Heart right ventricle (tissue), 16 donors: ENCODE measurements at regions of chr11 and their contacts with region 1.

Region 1: DNA sequence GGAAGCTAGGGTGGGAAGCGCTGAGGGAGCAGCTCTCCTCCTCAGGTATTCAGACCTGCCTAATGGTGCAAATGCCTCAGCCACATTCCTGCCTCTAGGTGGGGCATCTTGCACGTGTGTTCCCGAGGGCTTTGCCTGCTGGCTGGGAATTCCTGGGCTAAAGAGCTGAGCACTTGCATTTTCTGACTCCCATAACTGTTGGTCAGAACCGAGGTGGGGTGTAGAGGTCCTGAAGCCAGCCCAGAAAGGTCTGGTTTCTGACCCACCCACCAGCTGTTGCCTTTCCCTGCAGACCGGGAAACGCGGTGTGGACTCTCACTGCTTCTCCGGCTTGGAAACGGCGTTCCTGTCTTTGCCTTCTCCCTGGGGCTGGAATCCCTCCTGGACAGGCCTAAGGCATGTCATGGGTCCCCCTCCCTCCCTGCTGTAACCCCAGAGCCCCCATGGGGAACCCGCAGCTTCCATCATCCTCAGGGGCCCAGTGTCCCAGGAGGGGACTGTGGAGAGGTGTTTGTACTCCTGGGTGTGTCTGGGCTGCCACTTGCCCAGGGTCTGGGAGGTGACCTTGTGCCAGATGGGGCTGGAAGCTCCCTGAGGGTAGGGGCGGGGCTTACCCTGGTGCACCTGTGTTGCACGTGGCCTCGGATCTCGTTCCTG is 24.0 kb upstream of the SMIM38 start:
- DNase-seq: peak; percentile 58 to 76
- ATAC-seq: peak; percentile 79 to 90 (median 85)
- H3K4me3 ChIP-seq: no peak overlapping the region
- H3K27ac ChIP-seq: peak overlapping the region in 5 of 10 donors; percentile 23 to 72 (median 45)
- H3K4me1 ChIP-seq: peaks cover 5 to 26% (median 16%) of the 10 kb centered on the region in 9 donors
- H3K27me3 ChIP-seq: no peaks in the 10 kb centered on the region
- CTCF ChIP-seq: peak; percentile 65 to 95 (median 85)

Region 2: DNA sequence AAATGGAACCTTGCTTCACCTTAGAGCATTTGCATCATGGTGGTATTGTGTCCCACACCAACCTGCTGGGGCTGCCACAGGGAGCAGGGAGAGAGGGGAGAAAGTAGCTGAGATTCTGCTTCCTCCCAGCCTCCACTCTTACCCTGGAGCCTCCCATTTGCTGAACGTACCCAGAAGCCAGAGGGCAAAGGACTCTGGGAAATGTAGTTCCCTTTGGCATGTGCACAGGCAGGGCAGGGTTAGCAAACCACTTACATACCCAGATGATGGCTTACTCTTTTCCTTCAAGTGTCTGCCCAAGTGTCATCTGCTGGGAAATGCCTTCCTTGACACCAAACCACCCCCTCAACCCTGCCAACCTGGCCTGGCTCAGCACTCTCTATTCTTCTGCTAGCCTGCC is 40.9 kb after region 1 on chr11:
- intact Hi-C with region 1: no loop called
- DNase-seq: no peak
- ATAC-seq: no peak
- H3K4me3 ChIP-seq: no peak overlapping the region
- H3K27ac ChIP-seq: no peak overlapping the region
- H3K4me1 ChIP-seq: no peaks in the 10 kb centered on the region
- H3K27me3 ChIP-seq: no peaks in the 10 kb centered on the region
- CTCF ChIP-seq: no peak

Region 3: GRCh38 chr11:69211920-69212571 is 80.3 kb after region 1 on chr11:
- intact Hi-C with region 1: loop called in 2 of 10 experiments (anchors 5 to 10 kb)
- DNase-seq: no peak
- ATAC-seq: peak in 1 of 8 donors; percentile 26
- H3K4me3 ChIP-seq: no peak overlapping the region
- H3K27ac ChIP-seq: no peak overlapping the region
- H3K4me1 ChIP-seq: peaks cover 0 to 6% (median 0%) of the 10 kb centered on the region in 9 donors
- H3K27me3 ChIP-seq: peaks cover 0 to 12% (median 0%) of the 10 kb centered on the region in 7 donors
- CTCF ChIP-seq: peak in 7 of 9 donors; percentile 28 to 51 (median 41)

Region 4: DNA sequence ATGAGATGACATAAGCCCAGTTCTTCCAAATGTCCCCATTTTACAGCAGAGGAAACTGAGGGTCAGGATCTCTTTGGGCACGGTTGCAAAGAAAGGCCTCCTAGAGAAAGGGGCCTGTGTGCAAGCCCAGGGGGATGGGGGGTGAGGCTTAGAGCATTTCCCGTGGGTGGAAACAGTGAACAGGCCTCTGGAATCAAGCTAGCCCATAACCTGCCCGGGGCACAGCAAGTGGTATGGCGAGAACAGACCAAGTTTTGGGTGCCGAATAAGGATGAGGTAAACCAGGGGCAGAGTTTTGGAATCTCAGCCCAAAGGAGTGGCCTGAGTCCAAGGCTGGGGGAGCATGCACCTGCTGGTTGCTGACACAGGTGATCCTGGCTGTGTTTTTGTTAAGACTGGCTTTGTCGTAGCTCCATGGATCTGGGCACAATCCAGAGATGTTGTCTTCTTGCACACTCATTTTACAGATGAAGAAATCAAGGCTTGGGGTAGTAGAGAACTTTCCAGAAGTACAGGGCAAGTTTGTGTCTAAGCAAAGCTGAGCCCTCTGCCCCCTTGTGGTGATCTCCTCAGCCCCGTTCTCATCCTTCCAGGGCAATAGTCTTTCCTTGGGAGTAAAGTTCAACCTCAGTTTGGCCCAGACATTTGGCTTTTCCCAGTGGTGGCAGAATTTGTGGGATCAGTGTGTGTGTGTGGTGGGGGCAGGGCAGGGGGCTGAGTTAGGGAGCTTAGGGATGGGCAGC is 108.7 kb after region 1 on chr11:
- intact Hi-C with region 1: loop called in 1 of 10 experiments (anchors 10 kb)
- DNase-seq: no peak
- ATAC-seq: peak in 1 of 8 donors; percentile 12
- H3K4me3 ChIP-seq: no peak overlapping the region
- H3K27ac ChIP-seq: no peak overlapping the region
- H3K4me1 ChIP-seq: peaks cover 0 to 12% (median 8%) of the 10 kb centered on the region in 9 donors
- H3K27me3 ChIP-seq: no peaks in the 10 kb centered on the region
- CTCF ChIP-seq: peak in 5 of 9 donors; percentile 21 to 47 (median 33)

Region 5: GRCh38 chr11:69274531-69275255 is 142.9 kb after region 1 on chr11:
- intact Hi-C with region 1: loop called in 1 of 10 experiments (anchors 10 kb)
- DNase-seq: no peak
- ATAC-seq: no peak
- H3K4me3 ChIP-seq: no peak overlapping the region
- H3K27ac ChIP-seq: no peak overlapping the region
- H3K4me1 ChIP-seq: peaks cover 0 to 22% (median 11%) of the 10 kb centered on the region in 9 donors
- H3K27me3 ChIP-seq: no peaks in the 10 kb centered on the region
- CTCF ChIP-seq: no peak

Region 6: GRCh38 chr11:69296890-69297786 is 165.4 kb after region 1 on chr11:
- intact Hi-C with region 1: loop called in 4 of 10 experiments (anchors 10 kb)
- DNase-seq: peak; percentile 95
- ATAC-seq: peak; percentile 73 to 95 (median 89)
- H3K4me3 ChIP-seq: peak overlapping the region in 8 of 10 donors; percentile 6 to 37 (median 26)
- H3K27ac ChIP-seq: peak overlapping the region; percentile 17 to 94 (median 83)
- H3K4me1 ChIP-seq: peaks cover 26 to 79% (median 56%) of the 10 kb centered on the region in 9 donors
- H3K27me3 ChIP-seq: no peaks in the 10 kb centered on the region
- CTCF ChIP-seq: no peak

Region 7: GRCh38 chr11:69480547-69481392 is 349.0 kb after region 1 on chr11:
- intact Hi-C with region 1: loop called in 1 of 10 experiments (anchors 10 kb)
- DNase-seq: peak; percentile 66 to 74
- ATAC-seq: peak; percentile 16 to 73 (median 65)
- H3K4me3 ChIP-seq: no peak overlapping the region
- H3K27ac ChIP-seq: peak overlapping the region in 8 of 10 donors; percentile 64 to 82 (median 71)
- H3K4me1 ChIP-seq: peaks cover 14 to 36% (median 18%) of the 10 kb centered on the region in 9 donors
- H3K27me3 ChIP-seq: no peaks in the 10 kb centered on the region
- CTCF ChIP-seq: no peak